ENCODE measurements at regions of chr10 and their contacts with region 1.

Region 1: DNA sequence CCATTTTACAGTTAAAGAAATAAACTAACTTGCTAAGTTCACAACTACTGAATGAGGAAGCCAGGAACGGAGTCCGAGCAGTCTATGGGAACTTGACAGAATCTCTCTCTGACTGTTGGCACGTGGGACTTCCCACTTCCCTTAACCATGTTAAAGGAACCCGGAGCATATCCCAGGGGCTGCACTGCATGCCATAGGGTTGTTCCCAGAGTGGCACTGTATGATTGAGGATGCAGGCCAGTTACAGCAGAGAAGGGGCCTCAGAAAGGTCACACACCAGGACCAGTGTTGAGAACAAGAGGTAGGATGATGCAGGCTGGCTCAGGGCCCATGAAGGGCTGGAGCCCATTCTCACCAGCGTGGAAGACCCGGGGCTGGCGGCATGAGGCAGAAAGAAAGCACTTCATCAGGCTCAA is 201.8 kb downstream of the NSUN6 start:
- DNase-seq: no peak
- ATAC-seq: peak; percentile 51
- H3K4me3 ChIP-seq: no peak overlapping the region
- H3K27ac ChIP-seq: no peak overlapping the region
- H3K4me1 ChIP-seq: no peaks in the 10 kb centered on the region
- H3K27me3 ChIP-seq: no peaks in the 10 kb centered on the region
- CTCF ChIP-seq: no peak
- EP300 ChIP-seq: no peak
- POLR2A ChIP-seq: no peak
- RAD21 ChIP-seq: no peak

Region 2: DNA sequence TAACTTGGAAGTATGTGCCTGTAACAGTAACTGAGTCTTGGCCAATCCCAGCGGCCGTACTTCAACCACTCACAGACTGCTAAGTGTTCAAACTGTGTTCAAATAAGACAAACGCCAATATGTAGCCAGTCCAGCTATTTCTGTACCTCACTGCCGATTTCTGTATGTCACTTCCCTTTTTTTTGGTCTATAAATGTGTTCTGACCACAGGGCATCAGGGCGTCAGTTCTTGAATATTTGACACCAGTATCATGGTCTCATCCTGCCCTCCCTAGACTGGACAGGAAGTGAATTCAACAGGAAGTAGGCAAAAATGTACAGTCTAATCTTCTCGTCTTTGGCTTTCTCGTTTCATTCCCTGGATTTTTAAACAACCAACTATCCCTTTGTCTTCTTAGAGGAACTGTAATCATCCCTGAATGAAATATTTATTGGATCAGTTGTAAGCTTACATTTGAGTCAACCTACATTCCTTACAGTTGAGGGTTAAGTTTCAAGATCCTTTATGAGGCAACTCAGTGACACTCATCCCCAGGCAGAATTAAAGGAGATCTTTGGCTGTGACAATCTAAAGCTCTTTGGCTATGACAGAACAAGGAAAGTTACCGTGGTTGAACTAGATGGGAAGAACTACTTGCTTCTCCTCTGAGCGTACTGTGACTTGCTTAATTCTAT is 30.9 kb before region 1 on chr10:
- CTCF ChIA-PET with region 1: interaction called, 4 read pairs
- POLR2A ChIA-PET with region 1: interaction called, 5 read pairs
- RAD21 ChIA-PET with region 1: interaction called, 5 read pairs
- SMC1A ChIA-PET with region 1: interaction called, 14 read pairs
- in situ Hi-C with region 1: no loop called
- intact Hi-C with region 1: no loop called
- DNase-seq: no peak
- ATAC-seq: peak; percentile 75
- H3K4me3 ChIP-seq: no peak overlapping the region
- H3K27ac ChIP-seq: no peak overlapping the region
- H3K4me1 ChIP-seq: no peaks in the 10 kb centered on the region
- H3K27me3 ChIP-seq: no peaks in the 10 kb centered on the region
- CTCF ChIP-seq: no peak
- EP300 ChIP-seq: peak; percentile 40 to 52; a peak in 2 of 4 replicates
- POLR2A ChIP-seq: no peak
- RAD21 ChIP-seq: no peak

Region 3: DNA sequence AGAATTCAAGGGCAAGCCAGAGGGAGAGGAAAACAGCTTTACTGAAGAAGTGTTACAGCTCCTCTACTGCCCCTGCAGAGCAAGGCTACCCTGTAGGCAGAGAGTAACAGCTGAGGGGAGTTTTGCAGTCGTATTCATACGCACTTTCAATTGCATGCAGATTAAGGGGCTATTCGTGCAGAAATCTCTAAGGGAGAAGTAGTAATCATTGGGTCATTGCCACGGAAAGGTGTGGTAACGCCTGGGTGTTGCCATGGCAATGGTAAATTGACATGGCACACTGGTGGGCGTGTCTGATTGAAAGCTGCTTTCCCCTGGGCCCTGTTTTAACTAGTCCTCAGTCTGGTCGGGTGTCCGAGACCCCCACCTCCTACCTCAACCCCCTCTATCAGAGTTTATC is 25.4 kb before region 1 on chr10:
- CTCF ChIA-PET with region 1: interaction called, 4 read pairs
- POLR2A ChIA-PET with region 1: interaction called, 5 read pairs
- RAD21 ChIA-PET with region 1: interaction called, 4 read pairs
- SMC1A ChIA-PET with region 1: interaction called, 19 read pairs
- in situ Hi-C with region 1: no loop called
- intact Hi-C with region 1: no loop called
- DNase-seq: no peak
- ATAC-seq: peak; percentile 81
- H3K4me3 ChIP-seq: no peak overlapping the region
- H3K27ac ChIP-seq: no peak overlapping the region
- H3K4me1 ChIP-seq: no peaks in the 10 kb centered on the region
- H3K27me3 ChIP-seq: no peaks in the 10 kb centered on the region
- CTCF ChIP-seq: no peak
- EP300 ChIP-seq: peak; percentile 37 to 63; a peak in 2 of 4 replicates
- POLR2A ChIP-seq: no peak
- RAD21 ChIP-seq: no peak

Region 4: GRCh38 chr10:18429335-18429734 is 20.3 kb before region 1 on chr10:
- CTCF ChIA-PET with region 1: interaction called, 7 read pairs
- POLR2A ChIA-PET with region 1: interaction called, 8 read pairs
- RAD21 ChIA-PET with region 1: interaction called, 8 read pairs
- SMC1A ChIA-PET with region 1: interaction called, 65 read pairs
- in situ Hi-C with region 1: no loop called
- intact Hi-C with region 1: loop called (anchors 2 kb)
- DNase-seq: no peak
- ATAC-seq: no peak
- H3K4me3 ChIP-seq: no peak overlapping the region
- H3K27ac ChIP-seq: no peak overlapping the region
- H3K4me1 ChIP-seq: no peaks in the 10 kb centered on the region
- H3K27me3 ChIP-seq: no peaks in the 10 kb centered on the region
- CTCF ChIP-seq: no peak
- EP300 ChIP-seq: no peak
- POLR2A ChIP-seq: no peak
- RAD21 ChIP-seq: no peak

Region 5: GRCh38 chr10:18437486-18437885 is 12.1 kb before region 1 on chr10:
- CTCF ChIA-PET with region 1: interaction called, 7 read pairs
- POLR2A ChIA-PET with region 1: interaction called, 8 read pairs
- RAD21 ChIA-PET with region 1: interaction called, 8 read pairs
- SMC1A ChIA-PET with region 1: interaction called, 65 read pairs
- in situ Hi-C with region 1: no loop called
- intact Hi-C with region 1: loop called (anchors 2 kb)
- DNase-seq: no peak
- ATAC-seq: no peak
- H3K4me3 ChIP-seq: no peak overlapping the region
- H3K27ac ChIP-seq: no peak overlapping the region
- H3K4me1 ChIP-seq: no peaks in the 10 kb centered on the region
- H3K27me3 ChIP-seq: no peaks in the 10 kb centered on the region
- CTCF ChIP-seq: no peak
- EP300 ChIP-seq: no peak
- POLR2A ChIP-seq: no peak
- RAD21 ChIP-seq: no peak